ENCODE measurements at regions of chr19 and their contacts with region 1.

Region 1: GRCh38 chr19:2070436-2070827 is 19.4 kb upstream of the MKNK2 start:
- DNase-seq: peak; percentile 81 to 94 (median 93)
- H3K4me3 ChIP-seq: no peak overlapping the region
- H3K27ac ChIP-seq: peak overlapping the region in 4 of 5 donors; percentile 40 to 89 (median 76)
- H3K4me1 ChIP-seq: peaks cover 10 to 16% of the 10 kb centered on the region in 2 donors
- H3K27me3 ChIP-seq: no peaks in the 10 kb centered on the region
- CTCF ChIP-seq: no peak
- POLR2A ChIP-seq: peak in 1 of 2 donors; percentile 39

Region 2: GRCh38 chr19:1929021-1929742 is 141.2 kb before region 1 on chr19:
- intact Hi-C with region 1: loop called in 1 of 2 experiments (anchors 10 kb)
- DNase-seq: peak; percentile 70 to 88 (median 83)
- H3K4me3 ChIP-seq: peak overlapping the region in 1 of 4 donors; percentile 30
- H3K27ac ChIP-seq: peak overlapping the region in 1 of 5 donors; percentile 44
- H3K4me1 ChIP-seq: peaks cover 3 to 11% of the 10 kb centered on the region in 2 donors
- H3K27me3 ChIP-seq: no peaks in the 10 kb centered on the region
- CTCF ChIP-seq: peak; percentile 79 to 89 (median 88)
- POLR2A ChIP-seq: no peak

Region 3: DNA sequence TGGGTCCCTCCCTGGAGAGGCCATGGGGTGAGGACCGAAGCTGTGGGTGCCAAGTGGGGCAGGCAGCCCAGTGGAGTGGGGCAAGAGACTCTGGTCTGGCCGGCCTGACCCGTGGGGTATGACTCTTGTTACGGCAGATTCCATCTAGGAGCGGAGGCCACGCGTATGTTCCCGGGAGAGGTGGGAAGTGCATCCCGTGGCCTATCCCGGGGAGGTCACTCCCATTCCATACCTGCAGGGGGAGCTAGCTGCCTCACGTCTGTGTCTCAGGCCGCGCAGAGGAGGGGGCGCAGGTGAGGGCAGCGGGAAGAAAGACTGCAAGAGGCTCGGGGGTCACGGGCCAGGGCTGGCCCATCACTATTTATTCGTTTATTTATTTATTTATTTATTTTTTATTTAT is 124.5 kb before region 1 on chr19:
- intact Hi-C with region 1: no loop called
- DNase-seq: peak in 6 of 7 donors; percentile 51 to 77 (median 64)
- H3K4me3 ChIP-seq: no peak overlapping the region
- H3K27ac ChIP-seq: no peak overlapping the region
- H3K4me1 ChIP-seq: peaks cover 9 to 28% of the 10 kb centered on the region in 2 donors
- H3K27me3 ChIP-seq: no peaks in the 10 kb centered on the region
- CTCF ChIP-seq: peak; percentile 36 to 72 (median 58)
- POLR2A ChIP-seq: no peak

Region 4: DNA sequence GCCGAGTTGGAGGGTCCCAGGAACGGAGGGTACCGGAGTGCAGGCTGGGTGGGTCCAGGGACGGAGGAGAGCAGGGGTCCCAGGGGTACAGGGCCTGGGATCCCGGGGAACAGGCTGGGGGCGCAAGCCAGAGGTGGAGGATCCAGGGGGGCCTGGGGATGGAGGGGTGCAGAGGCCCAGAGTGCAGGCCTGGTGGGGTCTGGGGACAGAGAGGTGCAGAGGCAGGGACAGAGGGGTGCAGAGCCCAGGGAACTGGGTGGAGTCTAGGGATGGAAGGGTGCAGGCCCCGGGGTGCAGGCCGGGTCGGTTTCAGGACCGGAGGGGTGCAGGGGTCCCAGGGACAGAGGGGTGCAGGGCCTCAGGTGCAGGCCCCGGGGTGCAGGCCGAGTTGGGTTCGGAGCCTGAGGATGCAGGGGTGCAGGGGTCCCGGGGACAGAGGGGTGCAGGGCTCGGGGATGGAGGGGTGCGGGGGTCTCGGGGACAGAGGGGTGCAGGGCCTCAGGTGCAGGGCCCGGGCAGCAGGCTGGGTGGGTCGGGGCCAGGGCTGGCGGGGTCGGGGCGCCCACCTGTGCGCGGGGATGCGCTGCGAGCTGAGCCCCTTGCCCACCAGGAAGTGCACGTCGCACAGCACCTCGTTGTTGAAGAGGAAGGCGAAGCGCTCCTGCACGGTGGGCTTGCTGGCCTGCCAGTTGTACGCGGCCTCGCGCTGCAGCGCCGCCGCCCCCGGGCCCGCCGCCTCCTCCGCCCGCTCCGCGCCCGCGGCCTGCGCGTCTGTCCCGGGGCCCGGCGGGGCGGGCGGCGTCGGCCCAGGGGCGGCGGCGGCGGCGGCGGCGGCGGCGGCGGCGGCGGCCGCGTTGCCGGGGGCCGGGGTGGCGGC is 55.5 kb before region 1 on chr19:
- intact Hi-C with region 1: loop called (anchors 2 to 5 kb)
- DNase-seq: peak in 2 of 7 donors; percentile 50 to 55
- H3K4me3 ChIP-seq: peak overlapping the region in 3 of 4 donors; percentile 22 to 77 (median 49)
- H3K27ac ChIP-seq: peak overlapping the region in 2 of 5 donors; percentile 57 to 66
- H3K4me1 ChIP-seq: peaks cover 7 to 13% of the 10 kb centered on the region in 2 donors
- H3K27me3 ChIP-seq: no peaks in the 10 kb centered on the region
- CTCF ChIP-seq: no peak
- POLR2A ChIP-seq: no peak